CD8-positive, alpha-beta T cell (primary cell): ENCODE measurements at regions of chr22 and their contacts with region 1.

Region 1: DNA sequence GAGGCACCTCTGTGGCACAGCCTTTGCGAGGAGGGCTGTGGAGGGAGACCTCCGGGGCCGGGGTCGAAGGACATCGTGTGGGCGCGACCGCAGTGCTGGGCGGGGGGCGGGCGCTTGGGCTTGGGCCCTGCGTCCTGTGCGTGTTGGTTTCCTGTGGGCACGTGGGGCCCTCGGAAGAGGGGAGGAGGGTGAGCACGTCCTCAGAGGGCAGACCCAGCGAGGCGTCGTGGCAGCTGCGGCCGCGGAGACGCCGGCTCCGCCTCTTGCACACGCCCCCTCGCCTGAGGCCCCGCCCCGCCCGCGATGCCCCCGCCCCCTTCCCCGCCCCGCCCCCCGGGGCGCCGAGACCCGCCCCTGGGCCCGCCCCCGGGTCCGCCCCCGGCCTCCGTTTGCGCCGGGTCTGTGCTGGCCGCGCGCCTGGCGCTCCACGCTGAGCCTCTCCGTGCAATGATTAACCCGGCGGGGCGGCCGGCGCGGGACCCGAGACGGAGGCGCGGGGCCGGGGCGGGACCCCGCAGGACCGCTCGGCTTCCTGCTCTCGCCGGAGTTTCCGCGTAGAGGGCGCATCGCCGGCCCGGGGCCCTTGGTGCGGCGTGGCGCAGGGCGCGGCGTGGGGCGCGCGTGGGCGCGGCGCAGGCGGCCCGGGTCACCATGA is at the start of gene PRR5:
- DNase-seq: peak; percentile 57 to 94 (median 83)
- ATAC-seq: peak; percentile 89
- H3K4me3 ChIP-seq: peak within 1 kb of the TSS; percentile 60 to 76
- H3K4me3 Mint-ChIP-seq: peak within 1 kb of the TSS; percentile 84
- H3K27ac ChIP-seq: peak within 1 kb of the TSS; percentile 61 to 77
- H3K27ac Mint-ChIP-seq: peak within 1 kb of the TSS; percentile 86
- H3K4me1 ChIP-seq: peaks cover 50% of the 10 kb centered on the region
- H3K4me1 Mint-ChIP-seq: peaks cover 46% of the 10 kb centered on the region
- H3K27me3 ChIP-seq: no peaks in the 10 kb centered on the region
- H3K27me3 Mint-ChIP-seq: no peaks in the 10 kb centered on the region
- CTCF ChIP-seq: no peak
- total RNA-seq, gene PRR5: 47.6 to 49.3 TPM

Region 2: GRCh38 chr22:44669561-44669976 is 32.4 kb before region 1 on chr22:
- CTCF ChIA-PET with region 1: no interaction called
- POLR2A ChIA-PET with region 1: interaction called, 4 read pairs
- intact Hi-C with region 1: loop called (anchors 1 to 5 kb)
- DNase-seq: peak in 2 of 9 experiments; percentile 40 to 57
- ATAC-seq: no peak
- H3K4me3 ChIP-seq: peak overlapping the region; percentile 60 to 69
- H3K4me3 Mint-ChIP-seq: peak overlapping the region; percentile 78
- H3K27ac ChIP-seq: no peak overlapping the region
- H3K27ac Mint-ChIP-seq: peak overlapping the region; percentile 73
- H3K4me1 ChIP-seq: peaks cover 63% of the 10 kb centered on the region
- H3K4me1 Mint-ChIP-seq: peaks cover 67% of the 10 kb centered on the region
- H3K27me3 ChIP-seq: no peaks in the 10 kb centered on the region
- H3K27me3 Mint-ChIP-seq: no peaks in the 10 kb centered on the region
- CTCF ChIP-seq: peak; percentile 13

Region 3: GRCh38 chr22:44735540-44736488 is 33.9 kb after region 1 on chr22:
- CTCF ChIA-PET with region 1: interaction called, 112 read pairs
- POLR2A ChIA-PET with region 1: interaction called, 3 read pairs
- intact Hi-C with region 1: loop called (anchors 1 kb)
- DNase-seq: peak; percentile 67 to 93 (median 82)
- ATAC-seq: peak; percentile 87
- H3K4me3 ChIP-seq: no peak overlapping the region
- H3K4me3 Mint-ChIP-seq: no peak overlapping the region
- H3K27ac ChIP-seq: peak overlapping the region in 1 of 2 experiments; percentile 19
- H3K27ac Mint-ChIP-seq: peak overlapping the region; percentile 67
- H3K4me1 ChIP-seq: no peaks in the 10 kb centered on the region
- H3K4me1 Mint-ChIP-seq: peaks cover 6% of the 10 kb centered on the region
- H3K27me3 ChIP-seq: no peaks in the 10 kb centered on the region
- H3K27me3 Mint-ChIP-seq: no peaks in the 10 kb centered on the region
- CTCF ChIP-seq: peak; percentile 98

Region 4: GRCh38 chr22:44870021-44870420 is 168.1 kb after region 1 on chr22:
- CTCF ChIA-PET with region 1: no interaction called
- POLR2A ChIA-PET with region 1: no interaction called
- intact Hi-C with region 1: no loop called
- DNase-seq: no peak
- ATAC-seq: no peak
- H3K4me3 ChIP-seq: no peak overlapping the region
- H3K4me3 Mint-ChIP-seq: no peak overlapping the region
- H3K27ac ChIP-seq: no peak overlapping the region
- H3K27ac Mint-ChIP-seq: no peak overlapping the region
- H3K4me1 ChIP-seq: no peaks in the 10 kb centered on the region
- H3K4me1 Mint-ChIP-seq: no peaks in the 10 kb centered on the region
- H3K27me3 ChIP-seq: no peaks in the 10 kb centered on the region
- H3K27me3 Mint-ChIP-seq: peaks cover 24% of the 10 kb centered on the region
- CTCF ChIP-seq: no peak

Region 5: GRCh38 chr22:45163451-45164269 is 461.7 kb after region 1 on chr22 and contains the start of gene NUP50:
- CTCF ChIA-PET with region 1: no interaction called
- POLR2A ChIA-PET with region 1: no interaction called
- intact Hi-C with region 1: loop called in 1 of 2 experiments (anchors 10 kb)
- DNase-seq: peak; percentile 92 to 99 (median 96)
- ATAC-seq: peak; percentile 83
- H3K4me3 ChIP-seq: peak within 1 kb of the TSS; percentile 86 to 90
- H3K4me3 Mint-ChIP-seq: peak within 1 kb of the TSS; percentile 92
- H3K27ac ChIP-seq: peak within 1 kb of the TSS; percentile 86 to 88
- H3K27ac Mint-ChIP-seq: peak within 1 kb of the TSS; percentile 93
- H3K4me1 ChIP-seq: peaks cover 38% of the 10 kb centered on the region
- H3K4me1 Mint-ChIP-seq: peaks cover 65% of the 10 kb centered on the region
- H3K27me3 ChIP-seq: no peaks in the 10 kb centered on the region
- H3K27me3 Mint-ChIP-seq: no peaks in the 10 kb centered on the region
- CTCF ChIP-seq: no peak
- total RNA-seq, gene NUP50: 133 to 134 TPM

Region 6: GRCh38 chr22:45192701-45193187 is 490.8 kb after region 1 on chr22:
- CTCF ChIA-PET with region 1: no interaction called
- POLR2A ChIA-PET with region 1: no interaction called
- intact Hi-C with region 1: no loop called
- DNase-seq: no peak
- ATAC-seq: no peak
- H3K4me3 ChIP-seq: no peak overlapping the region
- H3K4me3 Mint-ChIP-seq: no peak overlapping the region
- H3K27ac ChIP-seq: no peak overlapping the region
- H3K27ac Mint-ChIP-seq: no peak overlapping the region
- H3K4me1 ChIP-seq: no peaks in the 10 kb centered on the region
- H3K4me1 Mint-ChIP-seq: no peaks in the 10 kb centered on the region
- H3K27me3 ChIP-seq: no peaks in the 10 kb centered on the region
- H3K27me3 Mint-ChIP-seq: no peaks in the 10 kb centered on the region
- CTCF ChIP-seq: no peak